Naive thymus-derived CD4-positive, alpha-beta T cell (primary cell): ENCODE measurements at regions of chr19 and their contacts with region 1.

Region 1: DNA sequence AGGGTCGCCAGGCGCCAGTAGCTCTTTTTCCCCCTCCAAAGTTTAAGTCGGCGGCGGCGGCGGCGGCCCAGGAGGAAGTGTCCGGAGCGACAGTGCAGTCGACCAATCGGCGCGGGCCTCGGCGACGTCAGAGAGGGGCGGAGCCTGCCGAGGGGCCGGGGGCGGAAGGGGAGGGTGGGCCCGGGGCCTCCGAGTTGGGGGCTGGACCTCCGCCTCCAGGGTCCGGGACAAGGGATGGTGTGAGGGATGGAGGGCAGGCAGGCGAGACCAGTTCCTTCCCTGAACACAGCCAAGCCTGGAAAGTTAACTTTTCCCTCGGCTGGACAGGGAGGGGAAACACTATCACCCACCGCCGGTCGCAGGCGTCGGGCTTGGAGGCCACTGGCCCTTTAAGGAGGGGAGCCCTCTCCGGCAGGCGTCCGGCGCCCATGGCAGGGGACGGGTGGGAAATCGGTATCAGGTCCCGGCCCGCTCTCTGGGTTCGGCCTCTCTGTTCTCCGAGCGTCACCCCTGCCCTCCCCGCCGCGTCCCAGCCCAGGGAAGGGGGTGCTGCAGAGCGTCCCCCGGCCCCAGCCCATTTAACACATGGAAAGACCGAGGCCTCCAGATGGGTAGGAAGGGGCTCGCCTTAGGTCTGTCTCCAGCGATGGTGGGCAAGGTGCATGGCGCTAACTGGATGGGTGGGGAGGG is at the start of gene PRKD2:
- DNase-seq: peak; percentile 68 to 96 (median 80)
- ATAC-seq: peak; percentile 71
- H3K4me3 ChIP-seq: peak within 1 kb of the TSS; percentile 97
- H3K4me3 Mint-ChIP-seq: peak within 1 kb of the TSS; percentile 89 to 98 (median 95)
- H3K27ac ChIP-seq: peak within 1 kb of the TSS; percentile 98
- H3K27ac Mint-ChIP-seq: peak within 1 kb of the TSS; percentile 94 to 99 (median 97)
- H3K4me1 ChIP-seq: peaks cover 29% of the 10 kb centered on the region in 2 donors
- H3K4me1 Mint-ChIP-seq: peaks cover 30 to 57% (median 44%) of the 10 kb centered on the region in 7 donors
- H3K27me3 ChIP-seq: no peaks in the 10 kb centered on the region
- H3K27me3 Mint-ChIP-seq: no peaks in the 10 kb centered on the region
- total RNA-seq, gene PRKD2: 120 to 181 (median 123) TPM

Region 2: DNA sequence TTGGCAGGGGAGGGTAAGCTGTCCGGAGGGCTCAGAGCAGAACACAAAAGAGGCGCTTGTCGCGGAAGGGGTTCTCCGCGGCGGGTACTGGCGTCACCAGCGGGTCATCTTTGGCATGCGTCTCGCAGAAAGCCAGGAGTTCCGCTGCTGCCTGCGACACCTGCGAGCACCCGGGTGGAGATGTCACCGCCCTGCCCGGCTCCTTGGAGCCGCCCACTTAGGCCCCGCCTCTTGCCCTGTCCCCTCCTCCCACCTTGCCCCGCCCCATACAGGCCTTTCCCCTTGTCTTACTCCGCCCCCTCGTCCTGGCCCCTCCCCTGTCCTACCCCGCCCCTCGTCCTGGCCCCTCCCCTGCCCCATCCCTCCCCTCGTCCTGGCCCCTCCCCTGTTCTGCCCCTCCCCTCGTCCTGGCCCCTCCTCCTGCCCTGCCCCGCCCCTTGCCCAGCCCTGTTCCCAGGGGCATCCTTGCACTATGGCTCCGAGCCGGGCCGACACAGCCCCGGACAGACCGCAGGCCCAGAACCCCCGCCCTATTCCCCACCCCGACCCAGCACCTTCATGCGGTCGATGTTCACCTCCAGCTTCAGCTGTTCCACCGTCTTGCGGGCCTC is 83.0 kb before region 1 on chr19:
- CTCF ChIA-PET with region 1: no interaction called
- POLR2A ChIA-PET with region 1: interaction called, 4 read pairs
- intact Hi-C with region 1: loop called in 1 of 2 experiments (anchors 1 kb)
- DNase-seq: peak; percentile 86 to 99 (median 97)
- ATAC-seq: peak; percentile 91
- H3K4me3 ChIP-seq: peak overlapping the region; percentile 62
- H3K4me3 Mint-ChIP-seq: peak overlapping the region in 9 of 10 donors; percentile 81 to 90 (median 87)
- H3K27ac ChIP-seq: peak overlapping the region; percentile 90
- H3K27ac Mint-ChIP-seq: peak overlapping the region in 8 of 9 donors; percentile 66 to 98 (median 94)
- H3K4me1 ChIP-seq: peaks cover 22 to 23% of the 10 kb centered on the region in 2 donors
- H3K4me1 Mint-ChIP-seq: peaks cover 10 to 32% (median 23%) of the 10 kb centered on the region in 7 donors
- H3K27me3 ChIP-seq: no peaks in the 10 kb centered on the region
- H3K27me3 Mint-ChIP-seq: peaks cover 0 to 13% (median 0%) of the 10 kb centered on the region in 5 donors

Region 3: GRCh38 chr19:46728693-46729676 is 11.8 kb after region 1 on chr19:
- CTCF ChIA-PET with region 1: interaction called, 21 read pairs
- POLR2A ChIA-PET with region 1: interaction called, 14 read pairs
- intact Hi-C with region 1: loop called (anchors 1 kb)
- DNase-seq: peak; percentile 66 to 91 (median 82)
- ATAC-seq: peak; percentile 77
- H3K4me3 ChIP-seq: no peak overlapping the region
- H3K4me3 Mint-ChIP-seq: peak overlapping the region in 1 of 10 donors; percentile 29
- H3K27ac ChIP-seq: no peak overlapping the region
- H3K27ac Mint-ChIP-seq: peak overlapping the region in 6 of 9 donors; percentile 7 to 59 (median 28)
- H3K4me1 ChIP-seq: peaks cover 0 to 5% of the 10 kb centered on the region in 2 donors
- H3K4me1 Mint-ChIP-seq: peaks cover 8 to 32% (median 16%) of the 10 kb centered on the region in 7 donors
- H3K27me3 ChIP-seq: no peaks in the 10 kb centered on the region
- H3K27me3 Mint-ChIP-seq: no peaks in the 10 kb centered on the region

Region 4: DNA sequence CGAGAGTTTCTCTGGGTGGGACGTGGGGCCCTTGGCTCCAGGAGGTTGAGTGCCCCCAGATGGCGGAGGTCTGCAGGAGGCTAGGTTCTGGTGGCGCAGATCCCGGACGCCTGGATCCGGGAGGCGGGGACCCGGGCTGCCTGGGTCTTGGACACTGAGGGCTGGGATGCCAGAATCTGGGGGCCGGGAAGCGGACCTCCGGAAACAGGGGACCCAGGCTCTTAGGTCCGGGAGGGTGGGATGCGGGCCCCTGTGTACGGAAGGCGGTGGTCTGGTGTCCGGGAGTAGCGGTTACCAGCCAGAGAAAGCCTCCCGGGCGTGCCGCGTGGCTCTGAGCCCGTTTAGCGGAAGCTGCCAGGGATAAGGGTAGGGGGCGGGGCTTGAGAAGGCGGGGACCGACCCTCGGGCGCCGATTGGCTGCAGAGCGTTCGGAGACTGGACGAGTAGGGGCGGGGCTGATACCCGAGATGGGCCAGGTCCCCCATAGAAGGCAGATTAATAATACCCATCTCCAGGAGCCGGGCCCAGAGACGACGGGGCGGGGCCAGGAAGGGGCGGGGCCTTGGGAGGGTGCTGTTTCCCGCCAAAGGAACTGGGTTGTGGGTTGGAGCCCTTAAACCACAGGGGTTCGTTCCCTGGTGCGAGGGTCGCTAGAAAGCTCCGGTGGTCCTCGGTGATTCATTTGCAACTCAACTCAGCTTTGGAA is 71.2 kb after region 1 on chr19 and contains the start of gene SLC1A5:
- CTCF ChIA-PET with region 1: no interaction called
- POLR2A ChIA-PET with region 1: interaction called, 3 read pairs
- intact Hi-C with region 1: loop called (anchors 1 to 2 kb)
- DNase-seq: peak; percentile 77 to 98 (median 84)
- ATAC-seq: peak; percentile 93
- H3K4me3 ChIP-seq: peak within 1 kb of the TSS; percentile 77
- H3K4me3 Mint-ChIP-seq: peak within 1 kb of the TSS; percentile 85 to 91 (median 89)
- H3K27ac ChIP-seq: peak within 1 kb of the TSS; percentile 62
- H3K27ac Mint-ChIP-seq: peak within 1 kb of the TSS; percentile 25 to 92 (median 86)
- H3K4me1 ChIP-seq: peaks cover 31 to 44% of the 10 kb centered on the region in 2 donors
- H3K4me1 Mint-ChIP-seq: peaks cover 19 to 72% (median 60%) of the 10 kb centered on the region in 7 donors
- H3K27me3 ChIP-seq: no peaks in the 10 kb centered on the region
- H3K27me3 Mint-ChIP-seq: peaks cover 0 to 3% (median 0%) of the 10 kb centered on the region in 5 donors
- total RNA-seq, gene SLC1A5: 3.5 to 120 (median 5.3) TPM

Region 5: DNA sequence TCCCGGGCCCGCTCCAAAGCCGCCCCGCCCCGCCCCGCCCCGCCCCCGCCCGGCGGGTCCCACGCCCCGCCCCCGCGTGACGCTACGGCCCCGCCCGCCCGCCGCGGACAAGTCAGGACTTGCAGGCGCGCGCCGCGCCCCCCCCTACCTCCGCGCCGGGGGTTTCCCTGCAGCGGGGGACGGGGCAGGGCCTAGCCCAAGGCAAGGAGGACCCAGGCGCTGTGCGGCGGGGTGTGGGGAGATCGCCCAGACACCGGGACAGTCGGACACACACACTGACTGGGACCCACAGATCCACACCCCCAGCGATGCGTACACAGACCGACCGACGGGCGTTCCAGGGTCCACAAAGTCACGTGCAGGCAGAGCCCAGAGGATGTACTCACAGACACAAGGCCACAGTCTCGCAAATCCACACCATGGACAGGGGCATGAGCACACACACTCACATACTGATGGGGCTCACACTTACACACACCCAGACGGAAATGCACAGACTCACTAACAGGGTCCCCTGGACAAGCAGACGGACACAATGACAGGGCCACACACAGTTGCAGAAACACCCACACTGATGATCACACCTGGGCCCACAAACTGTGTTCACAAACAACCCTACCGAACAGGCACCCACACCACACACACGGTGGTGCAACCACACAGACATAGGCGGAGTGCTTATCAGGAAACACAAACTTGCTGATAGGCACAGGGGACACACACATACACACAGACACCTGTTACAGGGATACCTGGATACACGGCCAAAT is 514.2 kb after region 1 on chr19:
- CTCF ChIA-PET with region 1: no interaction called
- POLR2A ChIA-PET with region 1: no interaction called
- intact Hi-C with region 1: loop called in 1 of 2 experiments (anchors 10 kb)
- DNase-seq: peak; percentile 77 to 94 (median 86)
- ATAC-seq: peak; percentile 78
- H3K4me3 ChIP-seq: peak overlapping the region; percentile 54
- H3K4me3 Mint-ChIP-seq: peak overlapping the region in 9 of 10 donors; percentile 69 to 88 (median 81)
- H3K27ac ChIP-seq: peak overlapping the region; percentile 80
- H3K27ac Mint-ChIP-seq: peak overlapping the region; percentile 20 to 92 (median 90)
- H3K4me1 ChIP-seq: peaks cover 36 to 45% of the 10 kb centered on the region in 2 donors
- H3K4me1 Mint-ChIP-seq: peaks cover 20 to 29% (median 24%) of the 10 kb centered on the region in 7 donors
- H3K27me3 ChIP-seq: no peaks in the 10 kb centered on the region
- H3K27me3 Mint-ChIP-seq: peaks cover 0 to 4% (median 0%) of the 10 kb centered on the region in 5 donors